Activated naive CD4-positive, alpha-beta T cell treated with anti-CD3 and anti-CD28 coated beads for 36 hours (primary cell): ENCODE measurements at regions of chr1 and their contacts with region 1.

Region 1: GRCh38 chr1:116151739-116152576 is 40.8 kb downstream of the MAB21L3 start:
- DNase-seq: peak; percentile 86
- H3K4me3 Mint-ChIP-seq: peak overlapping the region; percentile 60
- H3K27ac Mint-ChIP-seq: peak overlapping the region; percentile 14
- H3K4me1 Mint-ChIP-seq: peaks cover 18% of the 10 kb centered on the region
- H3K27me3 Mint-ChIP-seq: no peaks in the 10 kb centered on the region

Region 2: GRCh38 chr1:116168277-116169097 is 16.5 kb after region 1 on chr1:
- CTCF ChIA-PET with region 1: interaction called, 36 read pairs
- intact Hi-C with region 1: loop called (anchors 1 kb)
- DNase-seq: peak; percentile 88
- H3K4me3 Mint-ChIP-seq: peak overlapping the region; percentile 74
- H3K27ac Mint-ChIP-seq: no peak overlapping the region
- H3K4me1 Mint-ChIP-seq: peaks cover 8% of the 10 kb centered on the region
- H3K27me3 Mint-ChIP-seq: no peaks in the 10 kb centered on the region

Region 3: DNA sequence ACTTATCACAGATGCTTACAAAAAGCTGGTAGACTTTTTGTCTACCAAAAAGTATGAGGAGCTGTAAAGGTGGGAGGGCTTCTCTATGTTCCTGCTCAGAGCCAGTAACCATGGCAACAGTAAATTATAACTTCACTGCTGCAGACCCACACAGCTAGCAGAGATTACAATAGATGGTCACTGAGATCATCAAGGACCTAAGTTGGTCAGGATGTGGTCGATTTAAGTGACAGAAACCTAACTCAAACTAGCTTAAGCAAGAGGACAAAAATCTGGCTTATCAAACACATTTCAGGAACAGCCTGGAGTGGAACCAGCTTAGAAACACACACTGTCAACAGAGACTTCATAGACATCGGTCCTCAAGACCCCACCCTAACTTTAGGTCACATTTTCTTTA is 107.7 kb after region 1 on chr1:
- CTCF ChIA-PET with region 1: no interaction called
- intact Hi-C with region 1: no loop called
- DNase-seq: no peak
- H3K4me3 Mint-ChIP-seq: no peak overlapping the region
- H3K27ac Mint-ChIP-seq: no peak overlapping the region
- H3K4me1 Mint-ChIP-seq: peaks cover 37% of the 10 kb centered on the region
- H3K27me3 Mint-ChIP-seq: no peaks in the 10 kb centered on the region